ENCODE measurements at regions of chr4 and their contacts with region 1.

Region 1: GRCh38 chr4:6640292-6641163 is at the start of gene MRFAP1:
- DNase-seq: peak; percentile 88 to 93 (median 93)
- H3K4me3 ChIP-seq: peak within 1 kb of the TSS; percentile 68 to 98 (median 92)
- H3K27ac ChIP-seq: peak within 1 kb of the TSS; percentile 66 to 99 (median 96)
- H3K27me3 ChIP-seq: no peaks in the 10 kb centered on the region
- CTCF ChIP-seq: peak in 25 of 56 donors; percentile 9 to 53 (median 29)
- total RNA-seq, gene MRFAP1: 242 to 474 (median 356) TPM

Region 2: GRCh38 chr4:6574747-6575502 is 65.6 kb before region 1 on chr4 and contains the start of gene MAN2B2:
- intact Hi-C with region 1: loop called in 1 of 2 experiments (anchors 5 kb)
- DNase-seq: peak; percentile 81 to 96 (median 86)
- H3K4me3 ChIP-seq: peak within 1 kb of the TSS; percentile 63 to 100 (median 87)
- H3K27ac ChIP-seq: peak within 1 kb of the TSS; percentile 9 to 95 (median 86)
- H3K27me3 ChIP-seq: no peaks in the 10 kb centered on the region
- CTCF ChIP-seq: peak in 31 of 56 donors; percentile 11 to 58 (median 26)
- total RNA-seq, gene MAN2B2: 22.1 to 45.0 (median 34.3) TPM

Region 3: GRCh38 chr4:6673660-6674499 is 33.4 kb after region 1 on chr4:
- intact Hi-C with region 1: loop called (anchors 1 to 2 kb)
- DNase-seq: peak; percentile 90 to 96 (median 94)
- H3K4me3 ChIP-seq: peak overlapping the region; percentile 45 to 91 (median 79)
- H3K27ac ChIP-seq: peak overlapping the region; percentile 30 to 98 (median 91)
- H3K27me3 ChIP-seq: no peaks in the 10 kb centered on the region
- CTCF ChIP-seq: peak in 52 of 56 donors; percentile 9 to 62 (median 34)

Region 4: DNA sequence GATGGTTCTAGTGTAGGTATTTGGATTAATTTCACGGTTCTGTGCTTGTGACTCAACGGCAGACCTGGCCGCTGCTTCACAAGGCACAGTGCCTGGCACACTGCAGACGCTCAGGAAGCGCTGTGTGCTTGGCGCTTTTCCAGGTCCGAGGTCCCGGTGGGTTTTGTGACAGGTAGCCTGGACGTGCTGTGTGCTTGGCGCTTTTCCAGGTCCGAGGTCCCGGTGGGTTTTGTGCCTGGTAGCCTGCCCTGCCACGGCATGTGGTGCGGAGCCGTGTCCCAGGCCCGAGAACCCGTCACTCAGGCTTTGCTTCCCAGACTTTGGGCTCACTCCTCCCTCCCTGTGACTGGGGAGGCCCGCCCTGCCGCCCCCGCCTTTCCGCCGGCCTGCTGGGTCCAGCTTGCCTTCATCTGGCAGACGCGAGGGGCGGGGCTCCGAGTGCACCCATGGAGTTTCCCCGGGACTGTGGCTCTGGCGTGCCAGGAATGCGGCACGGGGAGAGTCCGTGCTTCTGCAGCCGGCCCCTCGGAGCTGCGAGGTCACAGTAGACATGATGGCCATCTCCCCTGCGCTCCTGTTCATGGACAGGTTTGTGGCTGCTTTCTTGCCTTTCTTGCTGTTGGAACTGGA is 313.3 kb after region 1 on chr4:
- intact Hi-C with region 1: no loop called
- DNase-seq: peak in 5 of 10 donors; percentile 47 to 74 (median 63)
- H3K4me3 ChIP-seq: peak overlapping the region in 32 of 59 donors; percentile 4 to 47 (median 29)
- H3K27ac ChIP-seq: peak overlapping the region in 1 of 59 donors; percentile 6
- H3K27me3 ChIP-seq: no peaks in the 10 kb centered on the region
- CTCF ChIP-seq: no peak

Region 5: GRCh38 chr4:7398104-7398423 is 757.5 kb after region 1 on chr4:
- intact Hi-C with region 1: no loop called
- DNase-seq: peak in 5 of 10 donors; percentile 34 to 52 (median 44)
- H3K4me3 ChIP-seq: no peak overlapping the region
- H3K27ac ChIP-seq: peak overlapping the region in 5 of 59 donors; percentile 1 to 44 (median 9)
- H3K27me3 ChIP-seq: peaks cover 0 to 4% (median 0%) of the 10 kb centered on the region in 45 donors
- CTCF ChIP-seq: peak in 6 of 56 donors; percentile 9 to 23 (median 12)